Adrenal gland (tissue), 19 donors: ENCODE measurements at regions of chr1 and their contacts with region 1.

Region 1: DNA sequence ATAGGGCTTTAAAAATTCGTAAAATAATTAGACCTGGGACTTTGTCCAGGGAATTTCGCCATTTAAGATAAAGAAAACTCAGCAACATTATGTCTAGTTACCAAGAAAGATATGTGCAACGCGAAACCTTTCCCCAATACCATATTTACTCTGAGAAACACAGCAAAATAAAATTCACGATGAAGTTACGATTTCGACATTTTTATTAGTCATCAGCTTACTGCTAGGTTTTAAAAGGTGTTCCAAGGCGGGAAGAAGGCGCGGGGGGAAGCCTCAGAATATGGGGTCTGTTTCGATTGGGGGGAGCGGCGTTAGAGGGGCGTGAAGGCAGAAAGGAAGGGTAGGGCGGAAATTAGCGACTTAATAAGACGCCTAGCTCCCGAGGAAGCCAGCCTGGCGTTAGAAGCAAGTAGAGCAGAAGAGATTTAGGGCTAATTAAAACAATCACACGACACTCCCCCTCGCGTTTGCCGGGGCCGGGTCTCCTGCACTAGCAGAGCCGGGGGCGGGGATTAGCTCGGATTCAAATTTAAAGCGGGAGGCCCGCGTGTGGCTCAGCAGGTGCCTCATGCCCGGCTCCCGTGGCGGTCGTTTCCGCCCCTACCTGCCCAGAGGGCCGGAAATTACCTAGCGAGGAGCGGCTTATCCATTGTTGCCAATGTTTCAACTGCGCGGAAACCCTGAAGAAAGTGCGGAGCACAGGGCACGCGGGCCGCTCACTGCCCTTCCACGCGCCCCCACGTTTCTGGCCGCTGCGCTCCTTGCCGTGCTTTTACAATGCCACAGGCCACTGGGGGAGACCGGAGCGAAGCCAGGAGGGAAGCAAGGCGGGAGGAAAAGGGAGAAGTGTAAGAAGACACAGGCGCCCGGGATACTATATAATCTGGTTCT is 795 bp upstream of the POU2F1 start:
- DNase-seq: peak; percentile 83 to 90 (median 87)
- H3K4me3 ChIP-seq: peak overlapping the region; percentile 27 to 93 (median 60)
- H3K27ac ChIP-seq: peak overlapping the region; percentile 23 to 83 (median 65)
- H3K4me1 ChIP-seq: peaks cover 11 to 31% of the 10 kb centered on the region in 2 donors
- H3K27me3 ChIP-seq: no peaks in the 10 kb centered on the region
- CTCF ChIP-seq: peak in 1 of 6 experiments; percentile 6
- POLR2A ChIP-seq: peak in 1 of 2 donors; percentile 2

Region 2: DNA sequence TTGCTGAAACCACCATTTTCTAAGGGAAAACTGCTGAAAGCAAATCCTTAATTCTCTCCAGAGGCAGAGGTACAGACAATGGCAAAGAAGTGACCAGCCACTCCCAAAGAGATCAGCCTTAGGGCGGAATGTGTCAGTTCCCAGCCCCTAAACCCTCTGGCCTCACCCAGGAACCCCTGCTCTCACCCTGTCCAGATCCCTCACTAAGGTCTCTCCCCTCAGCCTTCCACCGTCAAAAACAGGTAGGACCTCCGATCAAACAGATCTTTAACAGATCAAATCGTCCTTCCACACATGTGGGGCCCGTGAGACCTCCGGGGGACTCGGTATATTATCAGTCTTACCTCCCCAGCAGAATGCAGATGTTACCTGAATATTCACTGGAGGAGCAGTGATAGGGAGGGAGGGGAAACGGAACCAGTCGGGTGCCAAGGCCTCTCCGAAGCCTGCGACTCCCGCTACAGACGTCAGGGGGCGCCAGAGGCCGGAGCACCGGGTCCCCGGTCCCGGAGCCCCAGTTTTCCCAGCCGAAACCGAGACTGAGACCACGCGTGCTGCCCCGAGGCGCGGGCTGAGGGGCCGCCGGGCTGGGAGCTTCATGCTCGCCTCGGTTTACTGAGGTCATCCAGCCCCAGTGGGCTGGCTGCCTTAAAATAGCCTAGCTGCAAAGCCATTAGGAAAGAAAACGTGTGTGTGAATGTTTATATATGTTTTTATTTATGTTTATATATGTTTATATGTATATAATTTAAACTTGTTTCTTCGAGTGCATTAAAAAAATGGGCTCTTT is 153.4 kb before region 1 on chr1:
- intact Hi-C with region 1: loop called (anchors 10 kb)
- DNase-seq: peak; percentile 52 to 88 (median 80)
- H3K4me3 ChIP-seq: peak overlapping the region in 1 of 4 donors; percentile 17
- H3K27ac ChIP-seq: no peak overlapping the region
- H3K4me1 ChIP-seq: peaks cover 3 to 7% of the 10 kb centered on the region in 2 donors
- H3K27me3 ChIP-seq: peaks cover 3% of the 10 kb centered on the region
- CTCF ChIP-seq: peak; percentile 87 to 96 (median 90)
- POLR2A ChIP-seq: no peak

Region 3: GRCh38 chr1:167076136-167076710 is 143.7 kb before region 1 on chr1:
- intact Hi-C with region 1: loop called in 1 of 2 experiments (anchors 10 kb)
- DNase-seq: peak in 1 of 7 donors; percentile 25
- H3K4me3 ChIP-seq: no peak overlapping the region
- H3K27ac ChIP-seq: no peak overlapping the region
- H3K4me1 ChIP-seq: no peaks in the 10 kb centered on the region
- H3K27me3 ChIP-seq: peaks cover 3% of the 10 kb centered on the region
- CTCF ChIP-seq: no peak
- POLR2A ChIP-seq: no peak

Region 4: GRCh38 chr1:167373398-167373797 is 153.5 kb after region 1 on chr1:
- intact Hi-C with region 1: no loop called
- DNase-seq: no peak
- H3K4me3 ChIP-seq: no peak overlapping the region
- H3K27ac ChIP-seq: no peak overlapping the region
- H3K4me1 ChIP-seq: peaks cover 0 to 8% of the 10 kb centered on the region in 2 donors
- H3K27me3 ChIP-seq: no peaks in the 10 kb centered on the region
- CTCF ChIP-seq: no peak
- POLR2A ChIP-seq: no peak